PC-3 (cell line): ENCODE measurements at regions of chr6 and their contacts with region 1.

Region 1: GRCh38 chr6:44489910-44490604 is 102.6 kb downstream of the CDC5L start:
- DNase-seq: peak; percentile 96
- ATAC-seq: peak; percentile 73
- H3K4me3 ChIP-seq: peak overlapping the region; percentile 48
- H3K27ac ChIP-seq: peak overlapping the region; percentile 89
- H3K4me1 ChIP-seq: peaks cover 39% of the 10 kb centered on the region
- H3K27me3 ChIP-seq: no peaks in the 10 kb centered on the region
- CTCF ChIP-seq: no peak

Region 2: DNA sequence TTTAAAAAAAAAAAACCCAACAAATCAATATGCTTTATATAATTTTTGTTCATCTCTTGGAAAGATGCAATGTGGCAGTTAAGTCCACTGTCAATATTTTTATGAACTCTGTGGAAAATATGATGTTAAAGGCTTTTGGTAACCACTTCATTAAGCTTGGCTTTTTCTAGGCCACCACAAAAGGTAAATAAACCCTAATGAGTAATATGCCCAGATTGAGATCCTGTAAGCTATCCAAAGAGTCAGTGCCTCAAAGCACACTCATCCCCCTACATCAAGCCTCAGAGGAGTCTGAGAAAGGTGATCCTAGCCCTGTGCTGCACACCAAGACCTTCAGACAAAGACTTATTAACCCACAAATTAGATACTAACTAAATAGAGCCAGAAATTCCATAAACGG is 18.6 kb after region 1 on chr6:
- CTCF ChIA-PET with region 1: interaction called, 3 read pairs
- POLR2A ChIA-PET with region 1: no interaction called
- intact Hi-C with region 1: loop called (anchors 2 kb)
- DNase-seq: peak; percentile 73
- ATAC-seq: peak; percentile 98
- H3K4me3 ChIP-seq: no peak overlapping the region
- H3K27ac ChIP-seq: peak overlapping the region; percentile 17; the same call in 1 of the 2 replicates
- H3K4me1 ChIP-seq: peaks cover 13% of the 10 kb centered on the region
- H3K27me3 ChIP-seq: no peaks in the 10 kb centered on the region
- CTCF ChIP-seq: no peak

Region 3: DNA sequence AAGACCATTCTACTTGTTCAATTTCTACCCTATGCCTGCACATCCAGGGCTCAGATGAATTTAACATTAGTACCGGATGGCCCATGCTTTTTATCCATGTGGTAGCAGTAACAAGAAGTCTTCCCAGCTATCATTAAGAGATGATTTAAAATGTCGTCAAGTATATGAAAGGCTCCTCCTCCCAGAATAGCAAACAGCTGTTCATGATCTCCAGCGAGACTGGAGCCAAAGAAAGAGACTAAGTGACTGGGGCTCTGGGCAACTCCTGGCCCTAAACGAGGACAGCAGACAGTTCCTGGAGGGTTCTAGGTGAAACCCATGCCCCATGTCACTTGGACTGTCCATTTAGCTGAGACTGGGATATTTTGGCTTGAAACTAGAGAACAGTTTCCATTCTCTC is 58.3 kb after region 1 on chr6:
- CTCF ChIA-PET with region 1: no interaction called
- POLR2A ChIA-PET with region 1: no interaction called
- intact Hi-C with region 1: loop called (anchors 5 kb)
- DNase-seq: no peak
- ATAC-seq: no peak
- H3K4me3 ChIP-seq: no peak overlapping the region
- H3K27ac ChIP-seq: no peak overlapping the region
- H3K4me1 ChIP-seq: no peaks in the 10 kb centered on the region
- H3K27me3 ChIP-seq: no peaks in the 10 kb centered on the region
- CTCF ChIP-seq: no peak